AG04449 (cell line): ENCODE measurements at regions of chr7 and their contacts with region 1.

Region 1: DNA sequence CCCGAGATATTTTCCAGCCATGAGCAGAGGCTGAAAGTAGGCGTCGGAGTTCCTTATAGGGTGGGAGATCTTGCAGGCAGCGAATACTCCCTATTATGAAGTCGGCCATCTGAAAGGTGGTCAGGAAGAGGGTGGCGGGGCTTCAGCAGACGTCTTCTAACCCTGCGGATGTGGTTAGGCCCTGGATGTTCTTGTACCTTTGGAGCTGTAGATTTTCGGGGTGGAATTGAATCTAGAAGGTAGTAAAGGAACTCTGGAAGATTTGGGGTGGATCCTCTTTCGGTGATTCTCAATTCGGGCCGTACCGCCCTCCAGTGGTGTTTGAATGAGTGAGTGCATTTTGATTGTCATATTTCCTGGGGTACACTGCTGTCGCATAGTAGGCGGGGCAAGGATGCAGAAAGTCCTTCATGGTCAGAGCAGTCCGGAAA is 635 bp downstream of the NUP205 start:
- DNase-seq: no peak
- H3K4me3 ChIP-seq: peak overlapping the region; percentile 86
- CTCF ChIP-seq: peak; percentile 49

Region 2: GRCh38 chr7:135575296-135575695 is 16.9 kb after region 1 on chr7:
- CTCF ChIA-PET with region 1: interaction called, 15 read pairs
- POLR2A ChIA-PET with region 1: no interaction called
- DNase-seq: no peak
- H3K4me3 ChIP-seq: no peak overlapping the region
- CTCF ChIP-seq: no peak

Region 3: DNA sequence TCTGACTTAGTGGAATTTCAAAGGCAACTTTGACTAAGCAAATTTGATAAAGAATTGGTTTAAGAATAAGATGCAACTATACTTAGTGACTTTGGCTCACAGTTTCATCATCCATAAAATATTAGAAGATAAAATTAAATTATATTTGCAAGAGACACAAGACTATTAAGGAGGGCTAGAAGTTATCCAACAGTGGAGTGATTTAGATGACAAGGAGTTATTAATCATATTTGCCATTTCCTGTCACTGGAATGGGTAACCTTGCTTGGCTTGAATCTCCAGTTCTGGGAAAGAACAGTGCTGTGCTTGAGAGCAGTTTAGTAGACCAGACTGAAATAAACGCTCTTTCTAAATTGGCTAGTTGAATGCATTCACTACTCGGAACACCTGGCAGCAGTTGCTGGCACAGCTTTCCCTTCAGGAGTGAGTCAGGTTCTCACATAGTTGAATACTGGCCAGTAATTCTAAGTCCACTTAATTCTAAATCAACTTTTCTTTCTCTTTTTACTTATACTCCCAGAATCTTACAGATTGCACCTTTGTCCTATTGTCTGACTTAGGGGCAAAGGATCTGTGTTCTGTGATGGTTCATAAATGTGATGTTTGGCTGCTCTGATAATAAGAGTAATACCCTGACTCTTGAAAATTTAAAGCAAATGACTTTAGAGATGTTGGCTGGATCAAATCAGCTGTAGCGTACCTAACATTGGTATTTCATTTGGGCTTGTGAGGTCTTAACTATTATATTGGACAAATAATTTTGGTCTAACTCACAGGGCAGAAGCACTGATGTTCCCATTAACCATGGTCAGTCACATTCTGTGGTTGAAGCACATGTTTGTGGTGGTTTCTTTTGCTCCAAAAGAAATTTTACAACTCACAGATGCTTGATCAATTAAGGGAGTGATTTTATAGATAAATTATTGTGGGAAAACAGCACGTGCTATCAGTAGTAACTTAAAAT is 120.5 kb after region 1 on chr7:
- CTCF ChIA-PET with region 1: no interaction called
- POLR2A ChIA-PET with region 1: no interaction called
- DNase-seq: no peak
- H3K4me3 ChIP-seq: no peak overlapping the region
- CTCF ChIP-seq: no peak